B cell (primary cell): ENCODE measurements at regions of chr9 and their contacts with region 1.

Region 1: DNA sequence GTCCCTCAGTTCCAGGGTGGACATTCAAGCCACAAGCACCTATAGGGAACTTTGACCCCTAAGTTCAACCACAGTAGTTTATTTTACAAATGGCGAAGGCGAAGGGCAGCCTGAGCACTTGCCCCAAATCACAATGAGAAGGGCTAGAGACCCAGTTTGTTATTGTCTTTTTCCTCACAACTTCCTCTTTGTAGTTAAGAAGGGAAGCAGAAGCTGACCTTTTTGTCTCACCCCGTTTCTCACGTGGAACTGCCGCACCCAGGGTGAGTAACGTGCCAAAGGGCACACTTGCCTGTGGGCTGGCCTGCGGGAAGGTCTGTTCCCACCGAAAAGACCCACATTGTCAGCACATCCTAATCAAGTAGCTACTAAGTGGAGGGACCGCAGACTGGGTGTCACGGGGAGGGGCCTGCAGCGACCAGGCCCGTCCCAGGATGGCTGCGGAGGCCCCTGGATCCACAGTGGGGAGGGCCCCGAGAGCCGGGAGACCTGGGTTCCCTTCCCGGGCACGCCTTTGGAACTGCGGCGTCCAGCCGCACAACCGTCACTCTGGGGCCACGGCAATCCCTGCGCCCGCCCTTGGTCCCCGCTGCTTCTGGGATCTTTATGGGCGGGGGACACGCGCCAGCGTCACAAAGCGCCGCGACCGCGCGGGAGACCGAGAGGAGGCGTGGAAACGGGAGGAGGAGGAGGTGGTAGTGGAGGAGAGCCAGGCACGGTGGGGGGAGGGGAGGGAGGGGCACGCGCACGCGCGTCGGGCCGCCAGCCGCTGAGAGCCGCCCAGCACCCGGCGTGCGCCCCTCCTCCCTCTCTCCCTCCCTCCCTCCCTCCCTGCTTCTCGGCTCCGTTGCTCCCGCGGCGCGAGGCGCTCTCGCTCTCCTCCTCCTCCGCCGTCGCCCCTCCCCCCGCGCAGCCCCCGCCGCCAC is at the start of gene UBE2R2:
- DNase-seq: peak; percentile 97
- ATAC-seq: peak; percentile 73
- H3K4me3 ChIP-seq: peak within 1 kb of the TSS; percentile 68 to 85 (median 78)
- H3K4me3 Mint-ChIP-seq: peak within 1 kb of the TSS; percentile 98
- H3K27ac ChIP-seq: peak within 1 kb of the TSS; percentile 99
- H3K27ac Mint-ChIP-seq: peak within 1 kb of the TSS; percentile 100
- H3K4me1 ChIP-seq: peaks cover 46 to 52% of the 10 kb centered on the region in 2 donors
- H3K4me1 Mint-ChIP-seq: peaks cover 64% of the 10 kb centered on the region
- H3K27me3 ChIP-seq: no peaks in the 10 kb centered on the region
- H3K27me3 Mint-ChIP-seq: no peaks in the 10 kb centered on the region
- CTCF ChIP-seq: no peak
- total RNA-seq, gene UBE2R2: 46.0 and 48.8 TPM in 2 replicates

Region 2: GRCh38 chr9:33290247-33291030 is 526.2 kb before region 1 on chr9 and contains the start of gene NFX1:
- CTCF ChIA-PET with region 1: no interaction called
- POLR2A ChIA-PET with region 1: no interaction called
- intact Hi-C with region 1: loop called (anchors 10 kb)
- DNase-seq: peak; percentile 100
- ATAC-seq: peak; percentile 82
- H3K4me3 ChIP-seq: peak within 1 kb of the TSS; percentile 80 to 98 (median 86)
- H3K4me3 Mint-ChIP-seq: peak within 1 kb of the TSS; percentile 99
- H3K27ac ChIP-seq: peak within 1 kb of the TSS; percentile 99 to 100
- H3K27ac Mint-ChIP-seq: peak within 1 kb of the TSS; percentile 100
- H3K4me1 ChIP-seq: peaks cover 43 to 58% of the 10 kb centered on the region in 2 donors
- H3K4me1 Mint-ChIP-seq: peaks cover 62% of the 10 kb centered on the region
- H3K27me3 ChIP-seq: no peaks in the 10 kb centered on the region
- H3K27me3 Mint-ChIP-seq: no peaks in the 10 kb centered on the region
- CTCF ChIP-seq: no peak
- total RNA-seq, gene NFX1: 76.3 and 81.5 TPM in 2 replicates

Region 3: DNA sequence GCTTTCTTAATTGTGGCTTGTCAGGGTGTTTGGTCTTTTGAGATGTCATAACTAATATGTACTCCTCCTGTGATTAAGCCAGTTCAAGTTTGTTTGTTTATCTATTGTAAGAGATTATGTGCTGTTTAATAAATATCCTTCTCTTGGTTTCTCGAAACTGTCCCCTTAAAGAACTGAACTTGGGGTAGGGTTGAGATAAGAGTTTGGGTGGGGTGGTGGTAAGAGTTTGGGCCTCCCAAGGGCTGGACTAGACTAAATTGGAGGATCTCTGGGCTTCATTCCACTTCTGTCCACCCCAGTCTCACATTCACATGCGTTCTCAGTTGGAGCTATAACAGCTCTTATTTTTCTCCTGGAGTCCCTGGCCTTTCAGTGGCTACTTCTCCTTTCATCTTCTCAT is 452.5 kb before region 1 on chr9:
- CTCF ChIA-PET with region 1: no interaction called
- POLR2A ChIA-PET with region 1: no interaction called
- intact Hi-C with region 1: no loop called
- DNase-seq: no peak
- ATAC-seq: no peak
- H3K4me3 ChIP-seq: no peak overlapping the region
- H3K4me3 Mint-ChIP-seq: no peak overlapping the region
- H3K27ac ChIP-seq: no peak overlapping the region
- H3K27ac Mint-ChIP-seq: no peak overlapping the region
- H3K4me1 ChIP-seq: no peaks in the 10 kb centered on the region
- H3K4me1 Mint-ChIP-seq: no peaks in the 10 kb centered on the region
- H3K27me3 ChIP-seq: no peaks in the 10 kb centered on the region
- H3K27me3 Mint-ChIP-seq: no peaks in the 10 kb centered on the region
- CTCF ChIP-seq: no peak

Region 4: DNA sequence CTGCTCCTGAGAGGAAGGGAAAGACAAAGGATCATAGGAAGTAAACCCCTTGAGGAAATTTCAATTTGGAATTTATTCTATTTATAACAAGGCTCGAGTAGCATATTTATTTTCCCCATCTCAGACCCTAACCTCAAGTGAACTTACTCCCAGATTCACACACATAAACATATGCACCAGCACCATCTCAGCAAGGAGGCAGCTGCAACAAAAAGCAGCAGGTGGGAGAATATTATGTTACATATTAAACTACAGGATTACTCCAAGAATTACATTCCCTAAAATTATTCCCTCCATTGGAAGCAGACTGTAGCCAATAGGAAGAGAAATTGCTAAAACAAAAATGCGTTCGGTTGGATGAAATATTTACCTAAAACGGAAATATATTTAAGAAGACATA is 129.6 kb before region 1 on chr9:
- CTCF ChIA-PET with region 1: no interaction called
- POLR2A ChIA-PET with region 1: no interaction called
- intact Hi-C with region 1: no loop called
- DNase-seq: no peak
- ATAC-seq: no peak
- H3K4me3 ChIP-seq: no peak overlapping the region
- H3K4me3 Mint-ChIP-seq: no peak overlapping the region
- H3K27ac ChIP-seq: no peak overlapping the region
- H3K27ac Mint-ChIP-seq: no peak overlapping the region
- H3K4me1 ChIP-seq: no peaks in the 10 kb centered on the region
- H3K4me1 Mint-ChIP-seq: peaks cover 4% of the 10 kb centered on the region
- H3K27me3 ChIP-seq: peaks cover 0 to 7% (median 3%) of the 10 kb centered on the region in 4 experiments
- H3K27me3 Mint-ChIP-seq: peaks cover 54% of the 10 kb centered on the region
- CTCF ChIP-seq: no peak

Region 5: GRCh38 chr9:33852216-33852826 is 35.7 kb after region 1 on chr9:
- CTCF ChIA-PET with region 1: interaction called, 179 read pairs
- POLR2A ChIA-PET with region 1: interaction called, 7 read pairs
- intact Hi-C with region 1: loop called (anchors 1 kb)
- DNase-seq: peak; percentile 77
- ATAC-seq: peak; percentile 83
- H3K4me3 ChIP-seq: no peak overlapping the region
- H3K4me3 Mint-ChIP-seq: no peak overlapping the region
- H3K27ac ChIP-seq: peak overlapping the region in 1 of 2 donors; percentile 37
- H3K27ac Mint-ChIP-seq: no peak overlapping the region
- H3K4me1 ChIP-seq: peaks cover 12 to 19% of the 10 kb centered on the region in 2 donors
- H3K4me1 Mint-ChIP-seq: peaks cover 39% of the 10 kb centered on the region
- H3K27me3 ChIP-seq: no peaks in the 10 kb centered on the region
- H3K27me3 Mint-ChIP-seq: no peaks in the 10 kb centered on the region
- CTCF ChIP-seq: peak; percentile 64

Region 6: GRCh38 chr9:34048923-34049697 is 232.5 kb after region 1 on chr9:
- CTCF ChIA-PET with region 1: interaction called, 5 read pairs
- POLR2A ChIA-PET with region 1: no interaction called
- intact Hi-C with region 1: loop called (anchors 1 kb)
- DNase-seq: peak; percentile 99
- ATAC-seq: peak; percentile 81
- H3K4me3 ChIP-seq: peak overlapping the region; percentile 74 to 95 (median 90)
- H3K4me3 Mint-ChIP-seq: peak overlapping the region; percentile 100
- H3K27ac ChIP-seq: peak overlapping the region; percentile 87 to 91
- H3K27ac Mint-ChIP-seq: peak overlapping the region; percentile 100
- H3K4me1 ChIP-seq: peaks cover 15 to 22% of the 10 kb centered on the region in 2 donors
- H3K4me1 Mint-ChIP-seq: peaks cover 26% of the 10 kb centered on the region
- H3K27me3 ChIP-seq: no peaks in the 10 kb centered on the region
- H3K27me3 Mint-ChIP-seq: no peaks in the 10 kb centered on the region
- CTCF ChIP-seq: no peak

Region 7: GRCh38 chr9:34328987-34329832 is 512.6 kb after region 1 on chr9 and contains the starts of genes KIF24 and NUDT2:
- CTCF ChIA-PET with region 1: interaction called, 3 read pairs
- POLR2A ChIA-PET with region 1: no interaction called
- intact Hi-C with region 1: loop called (anchors 2 kb)
- DNase-seq: peak; percentile 99
- ATAC-seq: peak; percentile 91
- H3K4me3 ChIP-seq: peak within 1 kb of the TSS; percentile 90 to 99 (median 97)
- H3K4me3 Mint-ChIP-seq: peak within 1 kb of the TSS; percentile 96
- H3K27ac ChIP-seq: peak within 1 kb of the TSS; percentile 92 to 99
- H3K27ac Mint-ChIP-seq: peak within 1 kb of the TSS; percentile 93
- H3K4me1 ChIP-seq: peaks cover 14 to 25% of the 10 kb centered on the region in 2 donors
- H3K4me1 Mint-ChIP-seq: peaks cover 29% of the 10 kb centered on the region
- H3K27me3 ChIP-seq: no peaks in the 10 kb centered on the region
- H3K27me3 Mint-ChIP-seq: no peaks in the 10 kb centered on the region
- CTCF ChIP-seq: no peak
- total RNA-seq, gene KIF24: 0.79 and 0.87 TPM in 2 replicates
- total RNA-seq, gene NUDT2: 16.1 and 20.4 TPM in 2 replicates

Region 8: GRCh38 chr9:34611829-34612630 is 795.4 kb after region 1 on chr9 and contains the start of gene RPP25L:
- CTCF ChIA-PET with region 1: no interaction called
- POLR2A ChIA-PET with region 1: no interaction called
- intact Hi-C with region 1: loop called (anchors 10 kb)
- DNase-seq: peak; percentile 91
- ATAC-seq: peak; percentile 95
- H3K4me3 ChIP-seq: peak within 1 kb of the TSS; percentile 69 to 97 (median 80)
- H3K4me3 Mint-ChIP-seq: peak within 1 kb of the TSS; percentile 91
- H3K27ac ChIP-seq: peak within 1 kb of the TSS; percentile 78 to 87
- H3K27ac Mint-ChIP-seq: peak within 1 kb of the TSS; percentile 90
- H3K4me1 ChIP-seq: peaks cover 7 to 21% of the 10 kb centered on the region in 2 donors
- H3K4me1 Mint-ChIP-seq: peaks cover 22% of the 10 kb centered on the region
- H3K27me3 ChIP-seq: no peaks in the 10 kb centered on the region
- H3K27me3 Mint-ChIP-seq: no peaks in the 10 kb centered on the region
- CTCF ChIP-seq: no peak
- total RNA-seq, gene RPP25L: 20.2 and 21.7 TPM in 2 replicates